HCT116 (cell line): ENCODE measurements at regions of chr15 and their contacts with region 1.

Region 1: DNA sequence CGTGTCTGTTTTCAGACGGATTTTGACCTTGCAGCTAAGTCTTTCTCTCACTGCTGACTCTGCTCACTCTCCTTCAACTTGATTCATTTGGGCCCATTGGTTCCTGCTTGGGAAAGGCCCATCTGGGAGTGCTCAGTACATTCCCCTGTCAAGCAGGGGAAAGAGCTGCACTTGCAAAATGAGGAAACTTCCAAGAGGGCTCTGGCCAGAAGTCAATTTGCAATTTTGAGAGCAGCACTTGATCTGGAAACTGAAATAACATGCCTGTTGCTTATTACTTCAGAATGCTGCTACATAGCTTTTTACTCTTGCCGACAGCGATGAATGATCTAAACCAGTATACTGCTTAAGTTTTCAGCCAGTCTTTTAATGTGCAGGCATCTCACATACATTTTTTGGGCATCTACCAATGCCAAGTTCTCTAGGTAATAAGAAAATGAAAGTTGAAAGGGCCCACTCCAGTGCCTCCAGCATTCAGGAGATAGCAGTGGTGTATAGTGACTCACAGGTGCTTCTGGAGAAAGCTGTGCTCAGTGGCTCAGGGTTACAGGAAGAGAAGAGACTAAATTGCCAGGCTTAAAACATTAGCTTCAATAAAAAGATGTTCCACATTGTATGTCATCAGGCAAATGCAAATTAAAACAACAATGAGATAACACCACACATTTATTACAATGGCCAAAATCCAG is 70.1 kb upstream of the RORA start:
- DNase-seq: no peak
- ATAC-seq: no peak
- H3K4me3 ChIP-seq: no peak overlapping the region
- H3K27ac ChIP-seq: no peak overlapping the region
- H3K4me1 ChIP-seq: no peaks in the 10 kb centered on the region
- H3K27me3 ChIP-seq: no peaks in the 10 kb centered on the region
- CTCF ChIP-seq: no peak
- POLR2A ChIP-seq: no peak
- RAD21 ChIP-seq: no peak

Region 2: GRCh38 chr15:60720493-60721256 is 578.5 kb before region 1 on chr15:
- CTCF ChIA-PET with region 1: no interaction called
- POLR2A ChIA-PET with region 1: no interaction called
- RAD21 ChIA-PET with region 1: no interaction called
- intact Hi-C with region 1: no loop called
- DNase-seq: no peak
- ATAC-seq: no peak
- H3K4me3 ChIP-seq: no peak overlapping the region
- H3K27ac ChIP-seq: no peak overlapping the region
- H3K4me1 ChIP-seq: no peaks in the 10 kb centered on the region
- H3K27me3 ChIP-seq: peaks cover 71% of the 10 kb centered on the region
- CTCF ChIP-seq: no peak
- POLR2A ChIP-seq: no peak
- RAD21 ChIP-seq: no peak

Region 3: DNA sequence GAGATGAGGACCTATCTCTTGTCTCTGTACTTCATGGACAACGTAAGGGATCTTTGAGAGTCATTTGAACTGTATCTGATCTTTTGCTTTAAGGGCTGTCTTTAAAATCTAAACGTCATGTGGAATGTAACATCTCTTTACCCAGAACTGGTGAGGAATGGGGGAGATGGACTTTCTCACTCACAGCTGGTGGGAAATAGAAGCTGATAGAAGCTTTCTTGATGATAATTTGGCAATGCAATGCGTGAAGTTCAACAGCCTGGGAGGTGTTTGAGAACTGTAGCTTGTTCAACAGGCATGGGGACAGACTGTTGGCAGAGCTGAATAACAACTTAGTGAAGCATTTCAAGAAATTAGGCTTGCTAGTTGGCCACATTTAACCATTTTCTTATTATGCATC is 48.6 kb before region 1 on chr15:
- CTCF ChIA-PET with region 1: no interaction called
- POLR2A ChIA-PET with region 1: no interaction called
- RAD21 ChIA-PET with region 1: no interaction called
- intact Hi-C with region 1: loop called (anchors 1 kb)
- DNase-seq: no peak
- ATAC-seq: no peak
- H3K4me3 ChIP-seq: no peak overlapping the region
- H3K27ac ChIP-seq: no peak overlapping the region
- H3K4me1 ChIP-seq: no peaks in the 10 kb centered on the region
- H3K27me3 ChIP-seq: no peaks in the 10 kb centered on the region
- CTCF ChIP-seq: no peak
- POLR2A ChIP-seq: no peak
- RAD21 ChIP-seq: no peak

Region 4: DNA sequence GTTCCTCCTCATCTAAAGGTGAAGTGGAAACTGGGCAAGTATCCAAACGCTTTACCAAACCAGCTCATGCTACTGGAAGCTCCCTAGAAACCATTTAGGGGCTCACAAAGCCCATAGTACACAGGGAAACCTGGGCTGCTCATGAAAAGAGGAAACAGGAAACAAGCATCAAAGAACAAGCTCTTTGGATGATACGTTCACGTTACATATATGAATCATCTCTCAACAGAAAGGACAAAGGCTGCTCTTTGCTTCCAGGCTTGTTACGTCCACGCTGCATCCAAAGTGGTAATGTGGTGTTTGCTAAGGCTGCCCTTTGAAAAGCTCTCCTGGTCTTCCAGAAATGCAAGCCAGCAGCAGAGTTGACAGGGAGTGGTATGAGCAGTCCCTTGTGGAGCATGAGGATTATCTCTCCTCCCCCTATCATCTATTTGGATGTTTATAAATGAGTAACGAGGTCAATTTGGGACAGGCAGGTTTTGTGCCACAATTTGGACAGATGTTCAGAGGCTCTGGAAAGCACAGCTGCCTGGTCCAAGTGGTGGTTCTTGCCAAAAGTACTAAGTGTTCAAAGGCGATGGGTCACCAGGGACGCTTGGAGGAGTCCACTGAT is 27.9 kb after region 1 on chr15:
- CTCF ChIA-PET with region 1: no interaction called
- POLR2A ChIA-PET with region 1: no interaction called
- RAD21 ChIA-PET with region 1: no interaction called
- intact Hi-C with region 1: no loop called
- DNase-seq: no peak
- ATAC-seq: no peak
- H3K4me3 ChIP-seq: no peak overlapping the region
- H3K27ac ChIP-seq: no peak overlapping the region
- H3K4me1 ChIP-seq: no peaks in the 10 kb centered on the region
- H3K27me3 ChIP-seq: no peaks in the 10 kb centered on the region
- CTCF ChIP-seq: no peak
- POLR2A ChIP-seq: no peak
- RAD21 ChIP-seq: no peak